Transverse colon (tissue), 4 donors: ENCODE measurements at regions of chr7 and their contacts with region 1.

Region 1: DNA sequence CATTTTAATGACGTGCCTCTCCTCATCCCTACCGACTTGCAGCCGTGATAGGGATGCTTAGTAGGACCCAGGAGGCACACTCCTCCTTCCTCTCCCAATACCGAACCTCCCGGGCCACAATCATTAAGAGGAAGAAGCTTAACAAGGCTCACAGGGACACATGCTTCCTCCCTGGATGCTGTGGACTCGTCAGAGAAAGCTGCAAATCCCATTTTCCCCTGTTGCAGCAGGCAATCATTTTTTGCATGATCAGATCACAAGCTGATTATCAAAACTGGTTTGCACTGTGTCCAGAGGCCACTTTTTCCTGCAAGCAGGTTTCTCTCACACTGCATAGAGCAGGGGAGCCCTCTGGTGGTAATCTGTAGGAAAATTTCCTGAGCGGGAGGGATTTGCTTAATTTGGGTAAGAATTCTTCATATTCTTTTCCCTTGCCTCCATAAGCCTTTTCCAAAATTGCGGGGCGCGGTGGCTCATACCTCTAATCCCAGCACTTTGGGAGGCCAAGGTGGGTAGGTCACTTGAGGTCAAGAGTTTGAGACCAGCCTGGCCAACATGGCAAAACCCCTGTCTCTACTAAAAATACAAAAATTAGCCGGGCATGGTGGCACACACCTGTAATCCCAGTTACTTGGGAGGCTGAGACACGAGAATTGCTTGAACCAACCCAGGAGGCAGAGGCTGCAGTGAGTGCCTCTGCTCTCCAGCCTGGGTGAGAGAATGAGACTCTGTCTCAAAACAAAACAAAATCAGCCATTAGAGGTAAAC is 16.1 kb upstream of the LAMB4 start:
- DNase-seq: peak; percentile 63
- H3K4me3 ChIP-seq: no peak overlapping the region
- H3K27ac ChIP-seq: no peak overlapping the region
- H3K4me1 ChIP-seq: peaks cover 0 to 6% (median 2%) of the 10 kb centered on the region in 4 donors
- H3K27me3 ChIP-seq: no peaks in the 10 kb centered on the region
- CTCF ChIP-seq: peak; percentile 85 to 89 (median 87)
- EP300 ChIP-seq: no peak
- POLR2A ChIP-seq: no peak

Region 2: GRCh38 chr7:107890962-107891635 is 255.2 kb before region 1 on chr7 and contains the start of gene DLD:
- in situ Hi-C with region 1: loop called in 1 of 4 experiments (anchors 25 kb)
- intact Hi-C with region 1: loop called (anchors 10 kb)
- DNase-seq: peak; percentile 96
- H3K4me3 ChIP-seq: peak within 1 kb of the TSS; percentile 55 to 75 (median 66)
- H3K27ac ChIP-seq: peak within 1 kb of the TSS; percentile 94 to 96 (median 94)
- H3K4me1 ChIP-seq: peaks cover 14 to 30% (median 28%) of the 10 kb centered on the region in 4 donors
- H3K27me3 ChIP-seq: no peaks in the 10 kb centered on the region
- CTCF ChIP-seq: peak in 1 of 5 experiments; percentile 15
- EP300 ChIP-seq: no peak
- POLR2A ChIP-seq: peak; percentile 94
- total RNA-seq, gene DLD: 46.0 to 131 (median 126) TPM